Activated CD4-positive, alpha-beta T cell treated with anti-CD3 and anti-CD28 coated beads, Interleukin-2, amount 10 ng/mL, durations not matched to agents 24 days and 14 days (primary cell): ENCODE measurements at regions of chr2 and their contacts with region 1.

Region 1: GRCh38 chr2:118855451-118856279 is 8.2 kb upstream of the EN1 start:
- DNase-seq: peak; percentile 95
- H3K4me3 Mint-ChIP-seq: peak overlapping the region; percentile 48
- H3K27ac Mint-ChIP-seq: peak overlapping the region; percentile 37
- H3K4me1 Mint-ChIP-seq: peaks cover 8% of the 10 kb centered on the region
- H3K27me3 Mint-ChIP-seq: peaks cover 80% of the 10 kb centered on the region

Region 2: DNA sequence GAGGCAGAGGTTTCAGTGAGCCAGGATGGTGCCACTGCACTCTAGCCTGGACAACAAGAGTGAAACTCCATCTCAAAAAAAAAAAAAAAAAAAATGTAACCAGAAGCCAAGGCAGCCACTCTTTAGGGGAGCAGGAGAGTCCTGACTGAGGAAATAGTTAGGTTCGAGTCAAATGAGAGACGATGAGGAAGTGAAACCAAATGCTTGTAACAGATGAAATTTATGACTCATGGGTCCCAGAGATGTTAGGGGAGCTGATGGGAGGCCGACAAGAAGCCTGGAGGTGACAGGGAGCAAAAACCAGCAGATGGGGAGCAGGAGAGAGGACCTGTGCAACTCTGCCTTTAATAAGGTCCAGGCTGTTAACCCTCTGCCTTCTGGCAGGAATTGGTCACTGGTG is 1797.3 kb before region 1 on chr2:
- intact Hi-C with region 1: no loop called
- DNase-seq: no peak
- H3K4me3 Mint-ChIP-seq: no peak overlapping the region
- H3K27ac Mint-ChIP-seq: no peak overlapping the region
- H3K4me1 Mint-ChIP-seq: no peaks in the 10 kb centered on the region
- H3K27me3 Mint-ChIP-seq: no peaks in the 10 kb centered on the region

Region 3: GRCh38 chr2:118046634-118047210 is 808.9 kb before region 1 on chr2:
- intact Hi-C with region 1: loop called (anchors 2 kb)
- DNase-seq: no peak
- H3K4me3 Mint-ChIP-seq: no peak overlapping the region
- H3K27ac Mint-ChIP-seq: no peak overlapping the region
- H3K4me1 Mint-ChIP-seq: peaks cover 2% of the 10 kb centered on the region
- H3K27me3 Mint-ChIP-seq: peaks cover 41% of the 10 kb centered on the region

Region 4: DNA sequence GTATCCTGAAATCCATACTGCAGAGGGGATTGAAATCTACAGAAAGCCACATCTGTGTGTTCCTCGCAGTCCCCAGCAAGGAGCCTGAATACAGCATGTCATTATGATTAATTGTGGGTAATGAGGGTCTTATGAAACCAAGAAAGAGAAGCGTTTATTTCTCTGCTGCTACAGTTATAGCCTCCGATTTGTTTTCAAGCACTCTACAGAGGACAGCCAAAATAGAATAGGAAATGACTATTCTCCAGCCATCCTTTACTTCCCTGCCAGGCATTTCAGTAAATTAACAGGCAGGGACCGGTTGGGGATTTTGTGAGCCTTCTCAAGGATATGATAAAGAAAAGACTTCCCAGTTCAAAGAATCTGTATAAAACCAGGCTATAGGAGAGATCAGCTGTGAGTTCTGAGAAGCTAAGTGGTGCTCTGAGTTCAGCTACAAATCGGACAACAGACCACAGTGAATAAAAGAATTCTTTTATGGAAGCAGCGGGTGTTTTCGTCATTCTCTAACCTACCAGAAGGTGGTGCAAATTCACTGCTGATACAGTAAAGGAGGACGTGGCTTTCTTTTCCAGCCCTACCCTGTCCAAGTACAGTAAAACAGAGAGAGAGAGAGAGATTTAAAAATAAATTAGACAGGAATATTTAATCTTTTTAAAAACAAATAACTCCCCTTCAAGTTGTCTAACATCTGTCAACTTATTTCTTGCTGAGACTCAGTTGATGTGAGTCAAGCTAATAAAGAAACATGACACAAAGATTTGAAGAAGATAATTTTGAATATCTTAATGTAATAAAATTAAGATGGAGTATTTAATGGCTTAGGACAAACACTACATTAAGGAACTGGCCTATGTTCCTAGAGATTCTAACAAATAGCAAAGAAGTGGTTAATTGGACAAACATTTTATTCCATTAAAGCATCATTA is 633.7 kb before region 1 on chr2:
- intact Hi-C with region 1: loop called (anchors 1 kb)
- DNase-seq: peak; percentile 84
- H3K4me3 Mint-ChIP-seq: peak overlapping the region; percentile 10
- H3K27ac Mint-ChIP-seq: no peak overlapping the region
- H3K4me1 Mint-ChIP-seq: peaks cover 18% of the 10 kb centered on the region
- H3K27me3 Mint-ChIP-seq: peaks cover 71% of the 10 kb centered on the region

Region 5: GRCh38 chr2:118371515-118371914 is 484.1 kb before region 1 on chr2:
- intact Hi-C with region 1: loop called (anchors 5 kb)
- DNase-seq: no peak
- H3K4me3 Mint-ChIP-seq: no peak overlapping the region
- H3K27ac Mint-ChIP-seq: no peak overlapping the region
- H3K4me1 Mint-ChIP-seq: no peaks in the 10 kb centered on the region
- H3K27me3 Mint-ChIP-seq: peaks cover 14% of the 10 kb centered on the region

Region 6: GRCh38 chr2:118834901-118835745 is 20.5 kb before region 1 on chr2:
- intact Hi-C with region 1: loop called (anchors 2 kb)
- DNase-seq: no peak
- H3K4me3 Mint-ChIP-seq: peak overlapping the region; percentile 28
- H3K27ac Mint-ChIP-seq: peak overlapping the region; percentile 56
- H3K4me1 Mint-ChIP-seq: peaks cover 3% of the 10 kb centered on the region
- H3K27me3 Mint-ChIP-seq: peaks cover 78% of the 10 kb centered on the region

Region 7: DNA sequence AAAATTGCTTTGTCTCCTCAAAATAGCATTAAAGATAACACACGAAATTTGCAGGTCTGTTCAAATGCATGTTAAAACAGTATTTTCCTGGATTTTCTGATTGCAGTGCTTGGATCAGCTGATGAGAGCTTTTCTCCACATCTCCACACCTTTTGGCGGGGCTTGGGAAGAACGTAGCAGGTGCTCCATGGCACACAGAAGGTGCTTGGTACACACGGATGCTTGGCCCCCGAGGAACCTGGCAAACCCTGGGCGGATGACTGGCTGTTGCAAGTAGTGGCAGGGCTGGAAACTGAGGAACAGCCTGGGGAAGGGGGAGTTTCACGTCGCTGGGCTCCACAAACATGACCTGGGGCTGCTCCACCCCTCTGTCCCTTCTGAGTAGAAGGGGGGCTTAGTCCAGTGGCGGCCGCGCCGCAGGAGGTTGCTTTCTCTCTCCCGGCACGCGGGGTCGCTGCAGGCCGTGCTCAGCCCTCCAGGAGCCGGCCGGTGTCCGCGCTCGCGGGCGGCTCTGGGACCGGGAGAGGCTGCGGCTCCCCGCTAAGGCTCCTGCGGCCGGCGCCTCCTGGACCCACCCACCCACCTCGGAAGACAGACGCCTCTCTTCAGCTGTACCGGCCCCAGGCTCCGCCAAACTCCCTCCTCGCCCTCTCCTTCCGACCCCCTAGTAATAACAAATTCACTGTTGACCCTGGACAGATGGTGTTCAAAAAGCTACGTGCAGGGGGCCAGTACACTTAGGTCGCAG is 155.7 kb after region 1 on chr2:
- intact Hi-C with region 1: no loop called
- DNase-seq: peak; percentile 51
- H3K4me3 Mint-ChIP-seq: no peak overlapping the region
- H3K27ac Mint-ChIP-seq: no peak overlapping the region
- H3K4me1 Mint-ChIP-seq: no peaks in the 10 kb centered on the region
- H3K27me3 Mint-ChIP-seq: peaks cover 13% of the 10 kb centered on the region

Region 8: DNA sequence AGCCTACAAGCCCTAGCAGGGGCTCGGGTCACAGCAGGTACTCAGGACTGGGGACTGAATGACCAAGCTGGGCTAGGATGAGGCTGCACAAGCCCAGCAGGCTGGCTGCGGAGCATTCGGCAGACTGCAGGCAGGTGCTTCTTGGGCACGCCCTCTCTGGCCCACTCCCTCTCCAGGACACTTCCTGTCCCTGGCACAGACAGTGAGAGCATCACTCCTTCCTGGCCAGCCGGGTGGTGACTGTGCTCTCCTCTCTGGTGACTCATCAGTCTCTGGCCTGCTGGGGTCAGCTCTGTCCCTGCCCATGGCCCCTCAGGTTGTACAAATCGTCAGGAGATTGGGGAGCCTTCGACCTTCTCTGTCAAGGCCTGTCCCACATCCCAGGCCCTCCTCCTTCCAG is 280.4 kb after region 1 on chr2:
- intact Hi-C with region 1: no loop called
- DNase-seq: no peak
- H3K4me3 Mint-ChIP-seq: no peak overlapping the region
- H3K27ac Mint-ChIP-seq: no peak overlapping the region
- H3K4me1 Mint-ChIP-seq: no peaks in the 10 kb centered on the region
- H3K27me3 Mint-ChIP-seq: no peaks in the 10 kb centered on the region

Region 9: GRCh38 chr2:119158563-119159347 is 303.1 kb after region 1 on chr2 and contains the start of gene C1QL2:
- intact Hi-C with region 1: loop called (anchors 10 kb)
- DNase-seq: no peak
- H3K4me3 Mint-ChIP-seq: no peak within 1 kb of the TSS
- H3K27ac Mint-ChIP-seq: no peak within 1 kb of the TSS
- H3K4me1 Mint-ChIP-seq: no peaks in the 10 kb centered on the region
- H3K27me3 Mint-ChIP-seq: peaks cover 54% of the 10 kb centered on the region
- total RNA-seq, gene C1QL2: not detected in 2 replicates